H1 (cell line): ENCODE measurements at regions of chr15 and their contacts with region 1.

Region 1: GRCh38 chr15:55799291-55800212 is 56.6 kb upstream of the PRTG start:
- DNase-seq: peak in 1 of 2 experiments; percentile 84
- H3K4me3 ChIP-seq: no peak overlapping the region
- H3K27ac ChIP-seq: no peak overlapping the region
- H3K4me1 ChIP-seq: peaks cover 0 to 5% (median 2%) of the 10 kb centered on the region in 4 experiments; a peak in 3 of 7 replicates
- H3K27me3 ChIP-seq: no peaks in the 10 kb centered on the region; a peak in 1 of 7 replicates
- CTCF ChIP-seq: peak; percentile 79 to 90 (median 86)
- EP300 ChIP-seq: no peak
- POLR2A ChIP-seq: no peak
- RAD21 ChIP-seq: peak; percentile 94

Region 2: GRCh38 chr15:55789066-55789660 is 10.4 kb before region 1 on chr15:
- CTCF ChIA-PET with region 1: interaction called, 43 read pairs
- POLR2A ChIA-PET with region 1: no interaction called
- DNase-seq: peak in 1 of 2 experiments; percentile 88
- H3K4me3 ChIP-seq: no peak overlapping the region
- H3K27ac ChIP-seq: no peak overlapping the region
- H3K4me1 ChIP-seq: peaks cover 0 to 6% (median 2%) of the 10 kb centered on the region in 4 experiments; a peak in 3 of 7 replicates
- H3K27me3 ChIP-seq: no peaks in the 10 kb centered on the region
- CTCF ChIP-seq: peak; percentile 69 to 85 (median 82)
- EP300 ChIP-seq: no peak
- POLR2A ChIP-seq: no peak
- RAD21 ChIP-seq: peak; percentile 47 to 59

Region 3: GRCh38 chr15:55816017-55816416 is 16.5 kb after region 1 on chr15:
- CTCF ChIA-PET with region 1: interaction called, 11 read pairs
- POLR2A ChIA-PET with region 1: no interaction called
- DNase-seq: no peak
- H3K4me3 ChIP-seq: no peak overlapping the region
- H3K27ac ChIP-seq: no peak overlapping the region
- H3K4me1 ChIP-seq: no peaks in the 10 kb centered on the region
- H3K27me3 ChIP-seq: no peaks in the 10 kb centered on the region
- CTCF ChIP-seq: no peak
- EP300 ChIP-seq: no peak
- POLR2A ChIP-seq: no peak
- RAD21 ChIP-seq: no peak

Region 4: DNA sequence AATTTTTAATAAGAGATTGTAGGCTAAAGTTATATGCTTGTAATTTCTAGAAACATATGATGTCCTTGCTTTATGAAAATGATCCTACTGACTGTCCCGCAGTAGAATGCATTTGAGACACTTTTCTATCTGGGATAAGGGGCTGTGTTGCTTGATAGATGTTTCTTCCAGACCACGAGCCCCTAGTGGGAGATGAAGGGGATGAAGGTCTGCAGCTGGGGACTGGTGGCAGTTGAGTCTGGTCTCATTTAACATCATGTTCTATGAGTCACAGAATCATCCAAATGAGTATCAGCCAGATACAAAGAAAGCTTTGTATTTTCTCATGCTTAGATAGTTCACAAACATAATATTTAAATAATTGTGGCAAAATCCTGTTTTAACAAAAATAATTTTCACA is 27.7 kb after region 1 on chr15:
- CTCF ChIA-PET with region 1: interaction called, 16 read pairs
- POLR2A ChIA-PET with region 1: no interaction called
- DNase-seq: no peak
- H3K4me3 ChIP-seq: no peak overlapping the region
- H3K27ac ChIP-seq: no peak overlapping the region
- H3K4me1 ChIP-seq: no peaks in the 10 kb centered on the region
- H3K27me3 ChIP-seq: no peaks in the 10 kb centered on the region
- CTCF ChIP-seq: peak in 1 of 3 experiments; percentile 23; a peak in 1 of 4 replicates
- EP300 ChIP-seq: no peak
- POLR2A ChIP-seq: no peak
- RAD21 ChIP-seq: no peak; a peak in 1 of 4 replicates

Region 5: GRCh38 chr15:55846116-55846707 is 46.7 kb after region 1 on chr15:
- CTCF ChIA-PET with region 1: interaction called, 13 read pairs
- POLR2A ChIA-PET with region 1: no interaction called
- DNase-seq: peak; percentile 31 to 57
- H3K4me3 ChIP-seq: no peak overlapping the region
- H3K27ac ChIP-seq: no peak overlapping the region
- H3K4me1 ChIP-seq: no peaks in the 10 kb centered on the region
- H3K27me3 ChIP-seq: no peaks in the 10 kb centered on the region
- CTCF ChIP-seq: peak in 2 of 3 experiments; percentile 69 to 79; a peak in 3 of 4 replicates
- EP300 ChIP-seq: no peak
- POLR2A ChIP-seq: no peak
- RAD21 ChIP-seq: peak; percentile 80 to 85

Region 6: DNA sequence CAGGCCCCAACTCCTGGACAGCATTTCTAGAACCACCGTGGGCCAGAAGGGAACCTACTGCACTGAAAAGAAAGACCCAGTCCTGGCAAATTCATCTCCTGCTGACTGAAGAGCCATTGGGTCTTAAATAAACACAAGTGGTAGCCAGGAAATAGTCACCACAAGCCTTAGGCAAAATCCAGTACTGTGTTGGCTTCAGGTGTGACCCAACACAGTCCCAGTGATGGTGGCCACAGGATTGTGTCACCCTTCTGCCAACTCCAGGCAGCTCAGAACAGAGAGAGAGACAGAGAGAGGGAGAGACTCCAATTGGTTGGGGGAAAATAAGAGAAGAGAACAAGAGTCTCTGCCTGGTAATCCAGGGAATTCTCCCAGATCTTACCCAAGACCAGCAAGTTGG is 170.7 kb after region 1 on chr15:
- CTCF ChIA-PET with region 1: no interaction called
- POLR2A ChIA-PET with region 1: no interaction called
- DNase-seq: no peak
- H3K4me3 ChIP-seq: no peak overlapping the region
- H3K27ac ChIP-seq: no peak overlapping the region
- H3K4me1 ChIP-seq: no peaks in the 10 kb centered on the region
- H3K27me3 ChIP-seq: no peaks in the 10 kb centered on the region
- CTCF ChIP-seq: no peak
- EP300 ChIP-seq: no peak
- POLR2A ChIP-seq: no peak
- RAD21 ChIP-seq: no peak